ENCODE measurements at regions of chrX and their contacts with region 1.

Region 1: GRCh38 chrX:13000301-13000811 is 25.4 kb downstream of the TMSB4X start:
- DNase-seq: peak; percentile 42
- H3K4me3 Mint-ChIP-seq: peak overlapping the region; percentile 73
- H3K27ac Mint-ChIP-seq: peak overlapping the region; percentile 94
- H3K4me1 Mint-ChIP-seq: peaks cover 78% of the 10 kb centered on the region
- H3K27me3 Mint-ChIP-seq: no peaks in the 10 kb centered on the region

Region 2: DNA sequence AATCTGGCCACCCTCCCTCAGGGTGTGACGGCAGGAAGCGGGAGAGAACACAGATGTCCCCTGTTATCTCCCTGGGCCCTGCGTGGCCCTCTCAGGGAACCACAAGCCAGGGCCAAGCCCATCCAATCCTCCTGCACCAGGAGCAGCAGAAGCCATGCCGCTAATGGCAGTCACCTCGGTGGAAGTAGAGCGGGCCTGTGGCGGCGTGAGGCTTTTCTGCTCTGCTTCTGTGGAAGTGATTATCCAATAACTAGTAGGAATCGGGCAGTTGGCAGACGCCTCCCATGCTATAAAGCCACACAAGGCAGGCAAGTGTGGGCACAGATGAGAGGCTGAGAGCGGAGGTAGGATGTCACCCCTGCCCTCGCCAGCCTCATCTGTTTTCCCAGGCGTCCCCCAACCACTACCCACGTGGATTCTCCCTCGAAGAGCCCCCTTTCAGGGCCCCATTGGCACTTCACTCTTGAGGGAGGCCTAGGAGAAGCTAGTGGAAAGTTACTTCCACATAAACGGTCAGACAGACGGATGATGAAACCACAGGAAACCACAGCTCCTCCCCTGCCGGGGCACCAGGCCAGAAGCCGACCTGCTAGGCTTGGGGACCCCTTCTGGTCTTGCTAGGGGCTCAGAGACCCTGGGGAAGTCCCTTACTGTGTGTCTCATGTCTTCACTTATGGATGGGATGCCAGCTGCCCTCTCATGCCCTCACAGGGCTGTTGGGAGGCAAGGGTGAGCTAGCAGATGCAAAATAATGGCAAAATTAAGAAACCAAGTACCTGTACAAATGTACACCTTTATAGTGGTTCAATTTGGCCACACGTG is 44.3 kb before region 1 on chrX:
- CTCF ChIA-PET with region 1: interaction called, 8 read pairs
- POLR2A ChIA-PET with region 1: interaction called, 46 read pairs
- DNase-seq: peak; percentile 71
- H3K4me3 Mint-ChIP-seq: peak overlapping the region; percentile 80
- H3K27ac Mint-ChIP-seq: peak overlapping the region; percentile 99
- H3K4me1 Mint-ChIP-seq: peaks cover 72% of the 10 kb centered on the region
- H3K27me3 Mint-ChIP-seq: no peaks in the 10 kb centered on the region

Region 3: DNA sequence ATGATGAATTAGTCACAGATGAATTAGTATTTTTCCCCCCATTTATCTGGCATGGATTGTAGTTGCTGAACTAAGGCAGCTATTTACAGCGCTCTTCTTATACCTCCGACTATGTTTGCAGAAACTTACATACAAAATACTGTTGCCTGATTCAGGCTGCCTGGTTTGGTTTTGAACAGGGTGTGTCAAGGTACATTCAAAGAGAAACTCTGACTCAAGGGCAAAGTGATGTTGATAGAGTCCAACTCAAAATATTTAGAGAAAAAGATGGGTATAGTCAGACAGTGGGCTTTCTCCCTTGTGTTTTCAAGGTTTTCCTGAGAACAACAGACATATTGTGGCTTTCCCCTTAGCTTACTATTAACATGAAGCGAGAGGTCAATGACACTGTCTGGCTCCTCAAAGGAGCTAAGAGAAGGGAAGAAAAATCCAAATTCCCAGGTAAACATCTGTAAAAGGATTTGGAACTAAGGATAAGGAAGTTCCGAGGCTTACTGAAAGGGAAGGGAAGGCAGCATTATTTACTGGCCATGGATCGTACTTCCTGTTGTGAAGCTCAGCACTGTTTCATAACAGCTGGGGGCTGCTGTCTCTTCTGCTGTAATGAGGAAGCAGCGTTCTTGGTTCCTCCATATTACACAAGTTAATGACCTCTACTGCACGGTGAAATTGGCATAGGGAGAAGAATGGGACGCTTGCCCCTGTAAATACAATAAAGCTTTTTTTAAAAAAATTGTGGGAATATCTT is 13.2 kb after region 1 on chrX:
- CTCF ChIA-PET with region 1: interaction called, 10 read pairs
- POLR2A ChIA-PET with region 1: interaction called, 77 read pairs
- DNase-seq: no peak
- H3K4me3 Mint-ChIP-seq: peak overlapping the region; percentile 6
- H3K27ac Mint-ChIP-seq: peak overlapping the region; percentile 84
- H3K4me1 Mint-ChIP-seq: peaks cover 66% of the 10 kb centered on the region
- H3K27me3 Mint-ChIP-seq: no peaks in the 10 kb centered on the region

Region 4: DNA sequence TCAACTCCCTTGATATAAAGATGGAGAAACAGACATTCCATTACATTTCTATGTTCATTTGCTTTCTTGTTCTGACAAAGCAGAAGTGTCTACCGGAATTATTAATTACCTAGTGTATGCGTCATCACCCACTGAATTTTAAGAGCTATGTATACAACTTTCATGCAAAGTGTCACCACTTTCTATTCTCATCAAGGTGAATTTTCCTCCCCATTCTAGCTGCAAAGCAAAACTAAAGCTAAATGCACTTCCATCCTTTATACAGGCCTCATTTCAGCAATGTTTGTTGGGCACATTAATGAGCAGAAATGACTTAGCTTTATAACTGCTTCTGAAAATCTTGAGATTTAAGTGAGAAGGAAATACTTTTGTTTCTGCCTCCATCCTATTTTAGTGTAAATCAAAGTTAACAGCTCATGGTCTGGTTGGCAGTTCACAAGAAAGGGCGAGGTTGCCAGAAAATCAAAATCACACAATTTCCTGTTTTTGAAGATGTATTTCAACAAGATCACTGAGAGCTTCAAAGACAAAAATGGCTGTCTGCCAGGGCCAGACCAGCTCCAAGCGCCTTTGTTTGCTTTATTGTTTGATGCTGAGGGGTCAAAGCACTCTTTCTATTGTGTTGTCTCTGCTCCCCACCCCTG is 51.3 kb after region 1 on chrX:
- CTCF ChIA-PET with region 1: interaction called, 5 read pairs
- POLR2A ChIA-PET with region 1: interaction called, 25 read pairs
- DNase-seq: peak; percentile 20
- H3K4me3 Mint-ChIP-seq: no peak overlapping the region
- H3K27ac Mint-ChIP-seq: peak overlapping the region; percentile 92
- H3K4me1 Mint-ChIP-seq: peaks cover 65% of the 10 kb centered on the region
- H3K27me3 Mint-ChIP-seq: no peaks in the 10 kb centered on the region

Measured in activated CD4-positive, alpha-beta memory T cell treated with anti-CD3 and anti-CD28 coated beads, Interleukin-2, amount 10 ng/mL, durations not matched to agents 7 days and 5 days (primary cell).